Naive thymus-derived CD8-positive, alpha-beta T cell (primary cell): ENCODE measurements at regions of chr11 and their contacts with region 1.

Region 1: DNA sequence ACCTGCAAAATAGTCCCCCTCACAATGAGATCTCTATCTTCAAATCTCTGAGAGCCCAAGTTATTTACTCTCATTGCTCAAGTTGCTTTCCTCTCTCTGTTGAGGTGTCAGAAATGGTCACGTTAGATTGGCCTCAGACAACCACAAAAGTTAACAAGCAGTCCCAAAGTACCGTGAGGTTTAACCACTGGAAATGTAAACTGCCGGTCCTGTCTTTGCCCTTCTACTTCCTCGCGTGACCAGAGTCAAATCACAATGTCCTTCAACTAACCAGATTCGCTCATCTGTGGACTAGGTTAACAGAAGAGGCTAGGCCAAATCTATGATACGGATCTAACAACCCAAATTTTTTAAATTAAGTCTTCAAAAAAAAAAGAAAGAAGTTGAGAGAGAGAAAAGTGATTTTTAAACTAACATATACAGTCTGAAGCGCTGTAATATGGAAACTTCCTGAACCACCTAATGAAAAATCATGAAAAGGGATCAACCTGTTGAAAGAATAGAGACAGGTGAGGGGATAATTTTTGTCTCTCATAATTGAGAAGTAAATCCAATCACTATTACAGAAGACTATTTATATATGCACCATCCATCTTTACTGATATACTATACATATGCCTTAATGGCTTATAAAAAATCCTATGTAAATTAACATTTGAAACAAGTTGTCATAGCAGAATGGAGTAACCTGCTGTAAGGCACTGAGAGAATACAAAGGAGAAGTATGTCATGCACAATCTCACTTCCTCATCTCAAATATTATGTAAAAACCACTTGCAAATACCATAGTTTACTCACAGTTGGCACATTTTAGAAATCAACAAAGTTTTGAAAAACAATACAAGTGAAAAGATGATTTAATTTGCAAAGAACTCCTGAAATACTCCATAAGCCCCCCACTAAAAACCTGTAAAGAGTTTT is 3.3 kb upstream of the JAML start:
- DNase-seq: peak in 3 of 10 donors; percentile 38 to 40 (median 38)
- ATAC-seq: no peak
- H3K4me3 Mint-ChIP-seq: peak overlapping the region in 9 of 10 donors; percentile 34 to 78 (median 65)
- H3K27ac Mint-ChIP-seq: peak overlapping the region in 3 of 10 donors; percentile 92 to 96 (median 93)
- H3K4me1 Mint-ChIP-seq: peaks cover 10 to 27% (median 15%) of the 10 kb centered on the region in 4 donors
- H3K27me3 Mint-ChIP-seq: no peaks in the 10 kb centered on the region

Region 2: DNA sequence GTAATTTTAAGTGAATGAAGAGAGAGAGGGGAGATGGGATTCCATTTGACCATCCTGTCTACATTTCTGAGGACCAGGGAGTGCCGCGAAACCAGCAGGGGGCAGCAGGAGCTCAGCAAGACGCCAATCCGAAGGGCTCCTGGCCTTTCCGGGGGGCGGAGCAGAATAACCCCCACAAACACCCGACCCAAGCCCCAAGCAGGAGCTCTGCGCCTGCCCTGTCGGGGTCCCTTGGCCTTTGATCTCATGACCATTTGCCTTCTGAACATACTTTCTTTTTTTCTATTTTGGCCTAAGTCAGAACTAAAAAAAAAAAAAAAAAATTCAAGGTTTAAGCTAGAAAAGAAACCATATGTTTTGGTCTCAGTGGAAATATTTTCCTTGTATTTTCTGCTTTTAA is 29.8 kb before region 1 on chr11:
- POLR2A ChIA-PET with region 1: interaction called, 34 read pairs
- DNase-seq: peak; percentile 72 to 91 (median 82)
- ATAC-seq: peak; percentile 42
- H3K4me3 Mint-ChIP-seq: peak overlapping the region in 5 of 10 donors; percentile 21 to 52 (median 36)
- H3K27ac Mint-ChIP-seq: peak overlapping the region; percentile 26 to 93 (median 81)
- H3K4me1 Mint-ChIP-seq: peaks cover 5 to 14% (median 13%) of the 10 kb centered on the region in 4 donors
- H3K27me3 Mint-ChIP-seq: no peaks in the 10 kb centered on the region

Region 3: GRCh38 chr11:118216621-118217481 is 11.3 kb before region 1 on chr11:
- POLR2A ChIA-PET with region 1: interaction called, 60 read pairs
- DNase-seq: peak in 1 of 10 donors; percentile 21
- ATAC-seq: peak; percentile 52 to 57
- H3K4me3 Mint-ChIP-seq: peak overlapping the region in 9 of 10 donors; percentile 74 to 90 (median 86)
- H3K27ac Mint-ChIP-seq: peak overlapping the region in 8 of 10 donors; percentile 87 to 96 (median 94)
- H3K4me1 Mint-ChIP-seq: peaks cover 72 to 100% (median 98%) of the 10 kb centered on the region in 4 donors
- H3K27me3 Mint-ChIP-seq: no peaks in the 10 kb centered on the region

Region 4: GRCh38 chr11:118247047-118247446 is 18.9 kb after region 1 on chr11:
- POLR2A ChIA-PET with region 1: interaction called, 34 read pairs
- DNase-seq: no peak
- ATAC-seq: no peak
- H3K4me3 Mint-ChIP-seq: peak overlapping the region in 2 of 10 donors; percentile 19 to 33
- H3K27ac Mint-ChIP-seq: peak overlapping the region in 8 of 10 donors; percentile 41 to 93 (median 74)
- H3K4me1 Mint-ChIP-seq: peaks cover 33 to 77% (median 64%) of the 10 kb centered on the region in 4 donors
- H3K27me3 Mint-ChIP-seq: peaks cover 0 to under 1% (median 0%) of the 10 kb centered on the region in 5 donors

Region 5: GRCh38 chr11:118304568-118305248 is 76.6 kb after region 1 on chr11 and contains the start of gene CD3E:
- POLR2A ChIA-PET with region 1: interaction called, 30 read pairs
- DNase-seq: peak; percentile 25 to 85 (median 67)
- ATAC-seq: peak; percentile 65 to 75
- H3K4me3 Mint-ChIP-seq: peak within 1 kb of the TSS; percentile 90 to 100 (median 99)
- H3K27ac Mint-ChIP-seq: peak within 1 kb of the TSS; percentile 98 to 100 (median 99)
- H3K4me1 Mint-ChIP-seq: peaks cover 44 to 90% (median 78%) of the 10 kb centered on the region in 4 donors
- H3K27me3 Mint-ChIP-seq: no peaks in the 10 kb centered on the region
- polyA plus RNA-seq, gene CD3E: 811 to 1,213 (median 948) TPM